Heart right ventricle (tissue), 16 donors: ENCODE measurements at regions of chr10 and their contacts with region 1.

Region 1: GRCh38 chr10:69262292-69262751 is 16.0 kb upstream of the HK1 start:
- DNase-seq: no peak
- ATAC-seq: no peak
- H3K4me3 ChIP-seq: no peak overlapping the region
- H3K27ac ChIP-seq: no peak overlapping the region
- H3K4me1 ChIP-seq: peaks cover 0 to 8% (median 0%) of the 10 kb centered on the region in 9 donors
- H3K27me3 ChIP-seq: no peaks in the 10 kb centered on the region
- CTCF ChIP-seq: no peak

Region 2: GRCh38 chr10:69242852-69243212 is 19.5 kb before region 1 on chr10:
- intact Hi-C with region 1: loop called in 1 of 10 experiments (anchors 1 kb)
- DNase-seq: no peak
- ATAC-seq: no peak
- H3K4me3 ChIP-seq: no peak overlapping the region
- H3K27ac ChIP-seq: no peak overlapping the region
- H3K4me1 ChIP-seq: peaks cover 0 to 14% (median 2%) of the 10 kb centered on the region in 9 donors
- H3K27me3 ChIP-seq: no peaks in the 10 kb centered on the region
- CTCF ChIP-seq: no peak